ENCODE measurements at regions of chr12 and their contacts with region 1.

Region 1: GRCh38 chr12:68158432-68158831 is 1.1 kb downstream of the IFNG start:
- DNase-seq: peak in 2 of 5 donors; percentile 26 to 56
- H3K4me3 ChIP-seq: no peak overlapping the region
- H3K4me3 Mint-ChIP-seq: peak overlapping the region; percentile 44 to 89 (median 61)
- H3K27ac ChIP-seq: no peak overlapping the region
- H3K27ac Mint-ChIP-seq: peak overlapping the region in 4 of 8 donors; percentile 61 to 84 (median 71)
- H3K4me1 ChIP-seq: peaks cover 18% of the 10 kb centered on the region
- H3K4me1 Mint-ChIP-seq: peaks cover 55 to 75% (median 75%) of the 10 kb centered on the region in 3 donors
- H3K27me3 ChIP-seq: no peaks in the 10 kb centered on the region
- H3K27me3 Mint-ChIP-seq: peaks cover 0 to 3% of the 10 kb centered on the region in 2 donors

Region 2: GRCh38 chr12:68040450-68041075 is 117.9 kb before region 1 on chr12:
- CTCF ChIA-PET with region 1: interaction called, 24 read pairs
- POLR2A ChIA-PET with region 1: interaction called, 3 read pairs
- DNase-seq: peak; percentile 39 to 76 (median 58)
- H3K4me3 ChIP-seq: no peak overlapping the region
- H3K4me3 Mint-ChIP-seq: peak overlapping the region in 2 of 7 donors; percentile 41 to 51
- H3K27ac ChIP-seq: no peak overlapping the region
- H3K27ac Mint-ChIP-seq: peak overlapping the region in 6 of 8 donors; percentile 8 to 75 (median 34)
- H3K4me1 ChIP-seq: no peaks in the 10 kb centered on the region
- H3K4me1 Mint-ChIP-seq: peaks cover 29 to 53% (median 48%) of the 10 kb centered on the region in 3 donors
- H3K27me3 ChIP-seq: no peaks in the 10 kb centered on the region
- H3K27me3 Mint-ChIP-seq: no peaks in the 10 kb centered on the region

Region 3: GRCh38 chr12:68113644-68114043 is 44.8 kb before region 1 on chr12:
- CTCF ChIA-PET with region 1: interaction called, 34 read pairs
- POLR2A ChIA-PET with region 1: interaction called, 4 read pairs
- DNase-seq: peak; percentile 12 to 70 (median 19)
- H3K4me3 ChIP-seq: no peak overlapping the region
- H3K4me3 Mint-ChIP-seq: peak overlapping the region in 1 of 7 donors; percentile 20
- H3K27ac ChIP-seq: no peak overlapping the region
- H3K27ac Mint-ChIP-seq: peak overlapping the region in 1 of 8 donors; percentile 30
- H3K4me1 ChIP-seq: peaks cover 15% of the 10 kb centered on the region
- H3K4me1 Mint-ChIP-seq: peaks cover 16 to 26% (median 20%) of the 10 kb centered on the region in 3 donors
- H3K27me3 ChIP-seq: no peaks in the 10 kb centered on the region
- H3K27me3 Mint-ChIP-seq: no peaks in the 10 kb centered on the region

Region 4: GRCh38 chr12:68119724-68120211 is 38.7 kb before region 1 on chr12:
- CTCF ChIA-PET with region 1: interaction called, 14 read pairs
- POLR2A ChIA-PET with region 1: interaction called, 7 read pairs
- DNase-seq: peak in 4 of 5 donors; percentile 14 to 77 (median 34)
- H3K4me3 ChIP-seq: no peak overlapping the region
- H3K4me3 Mint-ChIP-seq: peak overlapping the region; percentile 19 to 84 (median 56)
- H3K27ac ChIP-seq: no peak overlapping the region
- H3K27ac Mint-ChIP-seq: peak overlapping the region in 6 of 8 donors; percentile 28 to 86 (median 76)
- H3K4me1 ChIP-seq: peaks cover 49% of the 10 kb centered on the region
- H3K4me1 Mint-ChIP-seq: peaks cover 4 to 28% (median 5%) of the 10 kb centered on the region in 3 donors
- H3K27me3 ChIP-seq: no peaks in the 10 kb centered on the region
- H3K27me3 Mint-ChIP-seq: no peaks in the 10 kb centered on the region

Region 5: GRCh38 chr12:68250454-68250853 is 92.0 kb after region 1 on chr12:
- CTCF ChIA-PET with region 1: no interaction called
- POLR2A ChIA-PET with region 1: no interaction called
- DNase-seq: no peak
- H3K4me3 ChIP-seq: no peak overlapping the region
- H3K4me3 Mint-ChIP-seq: no peak overlapping the region
- H3K27ac ChIP-seq: no peak overlapping the region
- H3K27ac Mint-ChIP-seq: no peak overlapping the region
- H3K4me1 ChIP-seq: no peaks in the 10 kb centered on the region
- H3K4me1 Mint-ChIP-seq: no peaks in the 10 kb centered on the region
- H3K27me3 ChIP-seq: no peaks in the 10 kb centered on the region
- H3K27me3 Mint-ChIP-seq: peaks cover 4 to 12% of the 10 kb centered on the region in 2 donors

Region 6: GRCh38 chr12:68591734-68592418 is 433.4 kb after region 1 on chr12:
- CTCF ChIA-PET with region 1: no interaction called
- POLR2A ChIA-PET with region 1: interaction called, 13 read pairs
- DNase-seq: peak in 3 of 5 donors; percentile 17 to 84 (median 76)
- H3K4me3 ChIP-seq: peak overlapping the region; percentile 27
- H3K4me3 Mint-ChIP-seq: peak overlapping the region; percentile 18 to 71 (median 69)
- H3K27ac ChIP-seq: no peak overlapping the region
- H3K27ac Mint-ChIP-seq: peak overlapping the region; percentile 70 to 97 (median 82)
- H3K4me1 ChIP-seq: peaks cover 65% of the 10 kb centered on the region
- H3K4me1 Mint-ChIP-seq: peaks cover 50 to 64% (median 52%) of the 10 kb centered on the region in 3 donors
- H3K27me3 ChIP-seq: no peaks in the 10 kb centered on the region
- H3K27me3 Mint-ChIP-seq: no peaks in the 10 kb centered on the region